Lower lobe of right lung (tissue), 2 donors: ENCODE measurements at regions of chr3 and their contacts with region 1.

Region 1: GRCh38 chr3:52238761-52239701 is at the start of gene TWF2:
- DNase-seq: peak; percentile 87
- ATAC-seq: peak; percentile 94 to 95
- H3K4me3 ChIP-seq: peak within 1 kb of the TSS; percentile 99
- H3K27ac ChIP-seq: peak within 1 kb of the TSS; percentile 93
- H3K4me1 ChIP-seq: peaks cover 56% of the 10 kb centered on the region
- H3K27me3 ChIP-seq: no peaks in the 10 kb centered on the region
- CTCF ChIP-seq: peak; percentile 46
- total RNA-seq, gene TWF2: 62.2 TPM

Region 2: GRCh38 chr3:52291508-52292181 is 52.6 kb after region 1 on chr3:
- intact Hi-C with region 1: no loop called
- DNase-seq: peak; percentile 32
- ATAC-seq: no peak
- H3K4me3 ChIP-seq: no peak overlapping the region
- H3K27ac ChIP-seq: no peak overlapping the region
- H3K4me1 ChIP-seq: peaks cover 17% of the 10 kb centered on the region
- H3K27me3 ChIP-seq: no peaks in the 10 kb centered on the region
- CTCF ChIP-seq: peak; percentile 50

Region 3: GRCh38 chr3:52339612-52340011 is 100.6 kb after region 1 on chr3:
- intact Hi-C with region 1: loop called (anchors 10 kb)
- DNase-seq: no peak
- ATAC-seq: peak; percentile 70 to 80
- H3K4me3 ChIP-seq: no peak overlapping the region
- H3K27ac ChIP-seq: no peak overlapping the region
- H3K4me1 ChIP-seq: no peaks in the 10 kb centered on the region
- H3K27me3 ChIP-seq: no peaks in the 10 kb centered on the region
- CTCF ChIP-seq: peak; percentile 64

Region 4: GRCh38 chr3:52350416-52350815 is 111.4 kb after region 1 on chr3:
- intact Hi-C with region 1: no loop called
- DNase-seq: peak; percentile 18
- ATAC-seq: no peak
- H3K4me3 ChIP-seq: no peak overlapping the region
- H3K27ac ChIP-seq: no peak overlapping the region
- H3K4me1 ChIP-seq: no peaks in the 10 kb centered on the region
- H3K27me3 ChIP-seq: no peaks in the 10 kb centered on the region
- CTCF ChIP-seq: no peak